ENCODE measurements at regions of chr1 and their contacts with region 1.

Region 1: DNA sequence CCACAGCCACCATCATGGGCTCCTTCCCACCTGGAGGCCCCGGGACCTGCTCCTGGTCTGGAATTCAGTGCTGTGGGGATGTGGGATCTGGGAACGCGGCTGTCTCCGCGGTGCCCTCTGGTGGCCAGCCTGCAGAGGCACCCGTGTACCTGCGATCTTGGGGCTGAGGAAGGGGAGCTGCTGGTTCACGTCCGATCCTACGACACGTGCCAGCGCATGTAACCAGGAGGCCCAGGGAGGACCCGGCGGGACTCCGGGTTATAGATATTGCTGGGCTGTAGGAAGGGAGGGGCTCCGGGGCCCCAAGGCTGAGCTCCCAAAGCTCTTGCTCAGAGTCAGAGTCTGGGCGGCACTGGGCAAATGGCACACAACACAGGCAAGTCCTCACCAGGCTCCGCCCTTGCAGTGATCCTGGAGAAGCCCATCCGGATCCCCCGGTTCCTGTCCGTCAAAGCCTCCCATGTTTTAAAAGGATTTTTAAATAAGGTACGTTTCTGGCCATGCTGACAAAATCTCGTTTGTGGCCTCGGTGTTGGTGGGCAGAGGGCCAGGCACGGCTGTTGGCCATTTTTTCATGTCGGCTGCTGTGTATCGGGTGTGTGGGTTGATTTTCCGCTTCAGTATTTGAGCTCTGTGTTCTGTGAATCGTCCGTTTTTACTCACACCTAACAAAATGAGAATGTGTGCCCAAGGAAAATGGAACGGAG is 20.1 kb downstream of the FAAP20 start:
- DNase-seq: peak; percentile 54
- ATAC-seq: peak; percentile 92
- H3K4me3 ChIP-seq: no peak overlapping the region
- H3K27ac ChIP-seq: no peak overlapping the region
- H3K4me1 ChIP-seq: peaks cover 3% of the 10 kb centered on the region
- H3K27me3 ChIP-seq: no peaks in the 10 kb centered on the region; the same call in 1 of the 2 replicates
- CTCF ChIP-seq: peak; percentile 80
- POLR2A ChIP-seq: no peak
- RAD21 ChIP-seq: peak; percentile 75

Region 2: GRCh38 chr1:1943834-1944570 is 230.5 kb before region 1 on chr1:
- CTCF ChIA-PET with region 1: no interaction called
- POLR2A ChIA-PET with region 1: no interaction called
- dilution Hi-C with region 1: no loop called
- in situ Hi-C with region 1: no loop called
- intact Hi-C with region 1: loop called (anchors 5 kb)
- DNase-seq: no peak
- ATAC-seq: peak; percentile 99
- H3K4me3 ChIP-seq: no peak overlapping the region
- H3K27ac ChIP-seq: no peak overlapping the region
- H3K4me1 ChIP-seq: no peaks in the 10 kb centered on the region
- H3K27me3 ChIP-seq: peaks cover 34% of the 10 kb centered on the region
- CTCF ChIP-seq: peak; percentile 62
- POLR2A ChIP-seq: no peak
- RAD21 ChIP-seq: peak; percentile 56

Region 3: GRCh38 chr1:2091611-2092604 is 82.6 kb before region 1 on chr1:
- CTCF ChIA-PET with region 1: interaction called, 4 read pairs
- POLR2A ChIA-PET with region 1: no interaction called
- dilution Hi-C with region 1: no loop called
- in situ Hi-C with region 1: no loop called
- intact Hi-C with region 1: loop called (anchors 5 kb)
- DNase-seq: no peak
- ATAC-seq: peak; percentile 21; the same call in 1 of the 2 replicates
- H3K4me3 ChIP-seq: no peak overlapping the region
- H3K27ac ChIP-seq: no peak overlapping the region
- H3K4me1 ChIP-seq: peaks cover 6% of the 10 kb centered on the region
- H3K27me3 ChIP-seq: peaks cover 2% of the 10 kb centered on the region; the same call in 1 of the 2 replicates
- CTCF ChIP-seq: peak; percentile 50
- POLR2A ChIP-seq: no peak
- RAD21 ChIP-seq: peak; percentile 48

Region 4: GRCh38 chr1:2108213-2108876 is 66.2 kb before region 1 on chr1:
- CTCF ChIA-PET with region 1: no interaction called
- POLR2A ChIA-PET with region 1: no interaction called
- dilution Hi-C with region 1: no loop called
- in situ Hi-C with region 1: no loop called
- intact Hi-C with region 1: loop called (anchors 1 kb)
- DNase-seq: peak; percentile 49
- ATAC-seq: peak; percentile 92
- H3K4me3 ChIP-seq: no peak overlapping the region
- H3K27ac ChIP-seq: no peak overlapping the region
- H3K4me1 ChIP-seq: no peaks in the 10 kb centered on the region; the same call in 1 of the 2 replicates
- H3K27me3 ChIP-seq: peaks cover 17% of the 10 kb centered on the region; the same call in 1 of the 2 replicates
- CTCF ChIP-seq: peak; percentile 64
- POLR2A ChIP-seq: no peak
- RAD21 ChIP-seq: peak; percentile 70

Region 5: DNA sequence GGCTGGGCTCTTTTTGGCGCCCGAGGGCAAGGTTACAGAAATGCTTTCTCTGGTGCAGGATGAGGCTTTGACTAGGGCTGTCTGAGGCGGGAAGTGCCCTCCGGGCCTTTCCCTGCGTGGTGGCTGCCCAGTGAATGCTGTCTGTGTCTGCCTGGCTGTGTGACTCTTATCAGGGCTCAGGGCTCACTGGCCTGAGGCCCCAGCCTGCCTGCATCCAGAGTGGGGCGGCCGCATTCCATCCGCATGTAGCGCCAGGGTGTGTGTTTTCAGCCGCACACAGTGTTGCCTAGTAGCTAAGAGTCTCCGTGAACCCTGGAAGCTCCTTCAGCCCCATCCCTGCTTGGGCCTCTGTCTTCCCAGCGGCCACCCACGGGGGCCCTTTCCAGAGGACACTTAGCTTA is 39.1 kb before region 1 on chr1:
- CTCF ChIA-PET with region 1: interaction called, 17 read pairs
- POLR2A ChIA-PET with region 1: no interaction called
- dilution Hi-C with region 1: no loop called
- in situ Hi-C with region 1: no loop called
- intact Hi-C with region 1: loop called (anchors 1 kb)
- DNase-seq: peak; percentile 85
- ATAC-seq: peak; percentile 22
- H3K4me3 ChIP-seq: no peak overlapping the region
- H3K27ac ChIP-seq: peak overlapping the region; percentile 15; the same call in 1 of the 2 replicates
- H3K4me1 ChIP-seq: peaks cover 16% of the 10 kb centered on the region
- H3K27me3 ChIP-seq: no peaks in the 10 kb centered on the region; the same call in 1 of the 2 replicates
- CTCF ChIP-seq: peak; percentile 32
- POLR2A ChIP-seq: peak; percentile 78
- RAD21 ChIP-seq: 0 out of 2 replicates have a peak, but pooled peaks have one; percentile 1

Region 6: GRCh38 chr1:2141036-2141435 is 33.5 kb before region 1 on chr1:
- CTCF ChIA-PET with region 1: interaction called, 17 read pairs
- POLR2A ChIA-PET with region 1: no interaction called
- dilution Hi-C with region 1: no loop called
- in situ Hi-C with region 1: no loop called
- intact Hi-C with region 1: no loop called
- DNase-seq: no peak
- ATAC-seq: no peak
- H3K4me3 ChIP-seq: no peak overlapping the region
- H3K27ac ChIP-seq: no peak overlapping the region
- H3K4me1 ChIP-seq: no peaks in the 10 kb centered on the region
- H3K27me3 ChIP-seq: no peaks in the 10 kb centered on the region; the same call in 1 of the 2 replicates
- CTCF ChIP-seq: no peak
- POLR2A ChIP-seq: no peak
- RAD21 ChIP-seq: no peak

Region 7: DNA sequence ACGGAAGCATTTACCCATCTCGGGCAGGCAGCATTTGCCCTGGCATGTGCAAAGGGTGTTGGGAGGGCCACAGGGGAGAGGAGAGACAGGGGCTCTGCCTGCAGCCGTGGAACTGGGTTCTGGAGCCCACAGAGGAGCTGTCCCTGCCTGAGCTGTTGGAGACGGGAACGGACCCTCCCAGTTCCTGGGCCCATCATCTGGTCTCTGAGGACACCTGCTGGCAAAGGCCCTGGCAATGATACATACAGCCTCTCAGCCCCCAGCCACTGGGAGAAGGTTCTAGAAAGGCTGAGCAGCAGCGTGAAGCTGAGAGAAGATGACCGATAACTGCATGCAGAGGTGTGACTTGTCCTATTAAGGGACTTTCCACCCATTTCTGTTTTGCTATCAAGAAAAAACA is 11.3 kb before region 1 on chr1:
- CTCF ChIA-PET with region 1: interaction called, 12 read pairs
- POLR2A ChIA-PET with region 1: no interaction called
- dilution Hi-C with region 1: no loop called
- in situ Hi-C with region 1: no loop called
- intact Hi-C with region 1: no loop called
- DNase-seq: no peak
- ATAC-seq: peak; percentile 27; the same call in 1 of the 2 replicates
- H3K4me3 ChIP-seq: no peak overlapping the region
- H3K27ac ChIP-seq: no peak overlapping the region
- H3K4me1 ChIP-seq: no peaks in the 10 kb centered on the region
- H3K27me3 ChIP-seq: peaks cover 16% of the 10 kb centered on the region
- CTCF ChIP-seq: peak; percentile 41
- POLR2A ChIP-seq: no peak
- RAD21 ChIP-seq: peak; percentile 54

Measured in IMR-90 (cell line).